CD4-positive, alpha-beta memory T cell (primary cell): ENCODE measurements at regions of chr6 and their contacts with region 1.

Region 1: GRCh38 chr6:52881996-52882841 is 27.3 kb downstream of the GSTA3 start:
- DNase-seq: peak; percentile 64 to 70 (median 66)
- H3K4me3 ChIP-seq: peak overlapping the region; percentile 37 to 53
- H3K4me3 Mint-ChIP-seq: peak overlapping the region; percentile 82 to 94 (median 86)
- H3K27ac ChIP-seq: no peak overlapping the region
- H3K27ac Mint-ChIP-seq: peak overlapping the region in 4 of 7 donors; percentile 48 to 88 (median 61)
- H3K4me1 ChIP-seq: no peaks in the 10 kb centered on the region
- H3K4me1 Mint-ChIP-seq: peaks cover 0 to 6% (median 5%) of the 10 kb centered on the region in 4 donors
- H3K27me3 ChIP-seq: no peaks in the 10 kb centered on the region
- H3K27me3 Mint-ChIP-seq: no peaks in the 10 kb centered on the region

Region 2: GRCh38 chr6:52407467-52407866 is 474.8 kb before region 1 on chr6:
- CTCF ChIA-PET with region 1: no interaction called
- POLR2A ChIA-PET with region 1: no interaction called
- intact Hi-C with region 1: no loop called
- DNase-seq: peak in 3 of 5 donors; percentile 35 to 43 (median 37)
- H3K4me3 ChIP-seq: no peak overlapping the region
- H3K4me3 Mint-ChIP-seq: peak overlapping the region in 1 of 8 donors; percentile 13
- H3K27ac ChIP-seq: no peak overlapping the region
- H3K27ac Mint-ChIP-seq: peak overlapping the region in 6 of 7 donors; percentile 18 to 88 (median 62)
- H3K4me1 ChIP-seq: no peaks in the 10 kb centered on the region
- H3K4me1 Mint-ChIP-seq: peaks cover 0 to 22% (median 11%) of the 10 kb centered on the region in 4 donors
- H3K27me3 ChIP-seq: no peaks in the 10 kb centered on the region
- H3K27me3 Mint-ChIP-seq: no peaks in the 10 kb centered on the region

Region 3: DNA sequence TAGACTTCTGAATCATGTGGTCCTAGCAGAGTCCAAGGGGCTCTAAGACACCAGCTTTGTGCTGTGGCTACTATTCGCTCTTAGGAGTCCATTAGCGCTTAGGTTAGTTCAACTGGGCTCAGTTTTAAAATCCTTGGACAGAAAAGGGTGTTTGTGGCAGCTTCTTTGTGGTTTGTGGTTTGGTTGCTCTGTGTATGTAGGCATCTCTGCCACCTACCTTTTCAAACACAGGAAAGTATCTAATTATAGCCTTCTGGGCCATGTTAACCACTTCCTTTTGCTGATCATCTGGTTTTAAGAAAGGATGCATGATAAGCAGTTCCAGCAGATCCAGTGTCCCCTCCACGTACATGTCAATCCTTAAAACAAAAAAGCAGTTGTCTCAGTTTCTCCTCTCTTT is 102.0 kb after region 1 on chr6:
- CTCF ChIA-PET with region 1: no interaction called
- POLR2A ChIA-PET with region 1: no interaction called
- intact Hi-C with region 1: loop called (anchors 2 kb)
- DNase-seq: peak; percentile 70 to 81 (median 76)
- H3K4me3 ChIP-seq: peak overlapping the region; percentile 9 to 11
- H3K4me3 Mint-ChIP-seq: peak overlapping the region; percentile 18 to 85 (median 78)
- H3K27ac ChIP-seq: no peak overlapping the region
- H3K27ac Mint-ChIP-seq: peak overlapping the region in 4 of 7 donors; percentile 37 to 86 (median 59)
- H3K4me1 ChIP-seq: peaks cover 31% of the 10 kb centered on the region
- H3K4me1 Mint-ChIP-seq: peaks cover 31 to 40% (median 34%) of the 10 kb centered on the region in 4 donors
- H3K27me3 ChIP-seq: no peaks in the 10 kb centered on the region
- H3K27me3 Mint-ChIP-seq: peaks cover 5 to 20% of the 10 kb centered on the region in 2 donors